ENCODE measurements at regions of chr20 and their contacts with region 1.

Region 1: GRCh38 chr20:50929299-50930138 is 1.7 kb downstream of the ADNP start:
- DNase-seq: peak; percentile 98
- ATAC-seq: peak; percentile 80
- H3K4me3 Mint-ChIP-seq: peak overlapping the region; percentile 92
- H3K27ac Mint-ChIP-seq: peak overlapping the region; percentile 95
- H3K4me1 Mint-ChIP-seq: peaks cover 55% of the 10 kb centered on the region
- H3K27me3 Mint-ChIP-seq: no peaks in the 10 kb centered on the region

Region 2: DNA sequence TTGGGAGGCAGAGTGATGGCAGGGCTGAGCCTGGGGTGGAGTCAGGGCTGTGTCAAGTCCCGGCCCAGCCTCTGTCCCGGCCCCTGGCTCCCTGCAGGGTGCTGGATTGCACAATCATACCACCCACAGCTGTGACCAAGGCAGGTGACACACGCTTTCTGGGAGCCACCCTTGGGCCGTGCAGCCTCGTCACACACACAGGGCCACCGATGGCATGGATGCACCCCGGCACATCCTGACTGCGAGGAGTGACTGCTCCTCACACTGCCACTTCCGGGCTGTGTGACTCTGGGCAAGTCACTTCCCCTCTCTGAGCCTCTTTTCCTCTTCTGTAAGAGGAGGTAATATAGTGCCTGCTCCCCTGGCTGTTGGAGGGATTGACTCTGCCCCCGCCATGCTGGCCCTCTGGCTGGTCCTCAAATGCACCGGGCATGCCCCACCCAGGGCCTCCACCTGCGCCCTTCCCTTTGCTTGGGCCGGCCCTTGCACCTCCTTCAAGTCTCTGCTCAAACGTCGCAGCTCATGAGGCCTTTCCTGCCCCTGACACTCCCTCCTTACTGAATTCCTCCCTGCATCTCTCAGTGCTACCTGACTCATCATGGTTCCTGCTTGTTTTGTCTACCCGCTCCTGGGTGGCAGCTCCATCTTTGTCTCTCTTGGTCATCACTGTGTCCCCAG is 645.5 kb before region 1 on chr20:
- CTCF ChIA-PET with region 1: no interaction called
- POLR2A ChIA-PET with region 1: no interaction called
- intact Hi-C with region 1: no loop called
- DNase-seq: peak; percentile 65
- ATAC-seq: peak; percentile 69
- H3K4me3 Mint-ChIP-seq: no peak overlapping the region
- H3K27ac Mint-ChIP-seq: peak overlapping the region; percentile 52
- H3K4me1 Mint-ChIP-seq: peaks cover 22% of the 10 kb centered on the region
- H3K27me3 Mint-ChIP-seq: peaks cover 3% of the 10 kb centered on the region

Region 3: GRCh38 chr20:50815162-50815989 is 114.1 kb before region 1 on chr20:
- CTCF ChIA-PET with region 1: interaction called, 13 read pairs
- POLR2A ChIA-PET with region 1: interaction called, 4 read pairs
- intact Hi-C with region 1: loop called (anchors 1 kb)
- DNase-seq: peak; percentile 57
- ATAC-seq: peak; percentile 60
- H3K4me3 Mint-ChIP-seq: peak overlapping the region; percentile 60
- H3K27ac Mint-ChIP-seq: peak overlapping the region; percentile 71
- H3K4me1 Mint-ChIP-seq: peaks cover 28% of the 10 kb centered on the region
- H3K27me3 Mint-ChIP-seq: no peaks in the 10 kb centered on the region

Region 4: GRCh38 chr20:50943069-50943468 is 13.6 kb after region 1 on chr20:
- CTCF ChIA-PET with region 1: interaction called, 10 read pairs
- POLR2A ChIA-PET with region 1: no interaction called
- intact Hi-C with region 1: no loop called
- DNase-seq: no peak
- ATAC-seq: no peak
- H3K4me3 Mint-ChIP-seq: no peak overlapping the region
- H3K27ac Mint-ChIP-seq: no peak overlapping the region
- H3K4me1 Mint-ChIP-seq: no peaks in the 10 kb centered on the region
- H3K27me3 Mint-ChIP-seq: no peaks in the 10 kb centered on the region

Measured in activated CD4-positive, alpha-beta T cell treated with anti-CD3 and anti-CD28 coated beads for 36 hours (primary cell).